ENCODE measurements at regions of chr10 and their contacts with region 1.

Region 1: DNA sequence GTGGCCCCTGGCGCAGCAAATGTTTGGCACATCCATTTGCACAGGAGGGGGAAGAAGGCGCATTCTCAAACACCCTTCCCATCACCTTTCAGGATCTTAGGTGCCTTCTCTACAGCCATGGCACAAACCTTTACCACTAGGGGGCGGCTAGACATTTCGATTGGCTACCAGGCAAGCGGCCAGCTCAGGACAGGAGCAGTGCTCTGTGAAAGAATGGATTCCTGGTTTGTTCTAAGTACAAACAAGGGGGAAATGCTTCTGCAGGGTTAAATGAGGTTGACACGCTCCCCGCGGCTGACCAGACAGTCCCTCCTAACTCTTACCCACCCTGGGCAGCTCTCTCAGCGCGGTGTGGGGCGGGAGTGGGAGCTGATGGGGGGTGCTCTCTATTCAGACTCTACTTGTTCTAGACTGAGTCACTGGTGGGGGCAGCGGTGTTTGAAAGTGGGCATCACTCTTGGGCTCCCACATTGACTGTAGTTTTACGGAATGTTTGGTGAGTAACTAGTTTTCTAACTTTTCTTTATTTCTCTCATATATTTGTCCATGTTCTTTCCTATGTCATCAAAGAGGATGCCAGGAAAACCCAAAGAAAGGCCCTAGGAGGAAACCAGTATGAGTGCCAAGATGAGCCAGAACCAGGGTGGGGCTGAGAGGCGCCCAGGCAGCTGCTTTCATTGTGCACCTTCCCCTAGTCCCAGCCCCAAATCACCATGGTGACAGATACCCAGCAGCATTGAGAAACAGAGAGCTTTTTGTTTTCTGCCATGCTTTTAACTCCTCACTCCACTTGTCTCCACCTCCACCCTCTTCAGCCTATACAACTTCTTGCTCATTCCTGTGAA is 61.4 kb upstream of the GPR158 start:
- DNase-seq: peak; percentile 83
- ATAC-seq: peak; percentile 75

Region 2: GRCh38 chr10:25226775-25227682 is 113.6 kb after region 1 on chr10:
- intact Hi-C with region 1: loop called (anchors 2 kb)
- DNase-seq: no peak
- ATAC-seq: no peak

Region 3: DNA sequence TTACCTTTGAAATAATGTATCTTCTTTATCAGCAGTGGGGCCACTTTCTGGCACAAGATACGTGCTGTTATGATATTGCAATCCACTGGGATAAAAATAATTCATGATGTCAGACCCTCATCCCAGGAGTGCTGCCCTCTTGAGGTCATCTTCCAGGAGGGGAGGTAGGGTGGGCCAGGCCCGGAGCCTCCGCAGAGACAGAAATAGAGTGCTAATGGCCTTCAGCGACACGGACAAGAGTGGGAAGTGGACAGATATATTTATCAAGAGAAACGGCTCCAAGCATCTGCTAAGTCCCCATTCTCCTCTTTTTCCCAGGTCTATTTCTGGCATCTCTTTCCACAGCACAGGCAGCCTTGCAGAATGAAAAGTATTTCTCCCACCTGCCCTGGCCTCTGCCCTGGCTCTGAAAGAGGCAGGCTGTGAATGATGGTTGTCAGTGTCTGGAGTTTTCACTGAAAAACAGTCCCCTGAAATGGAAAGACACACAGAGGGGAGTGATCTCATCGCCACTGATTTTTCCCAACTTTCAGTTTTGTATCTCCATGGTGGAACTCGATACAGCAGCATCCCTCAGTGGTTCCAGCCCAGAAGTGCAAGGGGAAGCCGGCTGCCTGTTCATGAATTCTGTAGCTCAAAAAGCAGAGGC is 568.9 kb after region 1 on chr10:
- intact Hi-C with region 1: loop called (anchors 10 kb)
- DNase-seq: no peak
- ATAC-seq: peak; percentile 73

Region 4: DNA sequence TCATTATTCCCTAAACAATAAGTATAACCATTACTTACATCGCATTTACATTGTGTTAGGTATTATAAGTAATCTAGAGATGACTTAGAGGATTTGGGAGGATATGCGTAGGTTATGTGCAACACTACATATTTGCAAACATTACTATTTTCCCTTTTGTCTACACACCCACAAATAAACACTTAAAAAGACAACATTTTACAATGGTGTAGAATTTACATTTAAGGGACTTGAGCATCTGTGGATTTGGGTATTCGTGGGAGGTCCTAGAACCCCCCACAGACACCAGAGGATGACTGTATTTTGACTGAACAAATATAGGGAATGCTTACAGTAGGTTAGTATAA is 600.5 kb after region 1 on chr10:
- intact Hi-C with region 1: loop called (anchors 10 kb)
- DNase-seq: no peak
- ATAC-seq: no peak

Measured in Right ventricle myocardium inferior (tissue), 1 donor.